GM12878 (cell line): ENCODE measurements at regions of chr1 and their contacts with region 1.

Region 1: GRCh38 chr1:192580351-192580962 is 4.9 kb downstream of the RGS1 start:
- DNase-seq: peak; percentile 81
- ATAC-seq: peak; percentile 33
- H3K4me3 ChIP-seq: peak overlapping the region; percentile 31; the same call in 1 of the 2 replicates
- H3K27ac ChIP-seq: no peak overlapping the region
- H3K4me1 ChIP-seq: no peaks in the 10 kb centered on the region
- H3K27me3 ChIP-seq: no peaks in the 10 kb centered on the region
- CTCF ChIP-seq: peak; percentile 29 to 70 (median 55); a peak in 5 of 6 replicates
- EP300 ChIP-seq: peak in 1 of 2 experiments; percentile 60; a peak in 2 of 4 replicates
- POLR2A ChIP-seq: peak; percentile 70; the same call in 1 of the 2 replicates
- RAD21 ChIP-seq: peak; percentile 95

Region 2: DNA sequence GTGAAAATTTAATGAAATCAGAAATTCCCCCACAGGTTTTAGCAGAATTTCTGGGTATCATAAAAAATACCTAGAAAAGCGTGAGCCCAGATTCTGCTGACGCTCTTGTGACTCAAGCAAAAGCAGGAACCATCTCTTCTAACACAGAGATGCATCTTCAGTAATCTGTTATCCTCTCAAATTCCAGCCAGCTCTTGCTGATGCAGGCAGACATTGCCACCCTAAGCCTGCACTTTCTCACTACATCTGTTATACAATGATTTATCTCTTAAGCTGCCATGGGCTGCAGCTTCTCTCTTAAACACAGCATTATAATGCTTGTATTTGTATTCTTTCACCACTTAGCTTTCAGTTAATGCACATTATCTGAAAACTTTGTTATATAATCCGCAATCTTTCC is 117.8 kb before region 1 on chr1:
- CTCF ChIA-PET with region 1: no interaction called
- POLR2A ChIA-PET with region 1: no interaction called
- RAD21 ChIA-PET with region 1: no interaction called
- SMC1A ChIA-PET with region 1: no interaction called
- in situ Hi-C with region 1: no loop called
- intact Hi-C with region 1: no loop called
- DNase-seq: no peak
- ATAC-seq: no peak
- H3K4me3 ChIP-seq: no peak overlapping the region
- H3K27ac ChIP-seq: no peak overlapping the region
- H3K4me1 ChIP-seq: no peaks in the 10 kb centered on the region
- H3K27me3 ChIP-seq: no peaks in the 10 kb centered on the region
- CTCF ChIP-seq: no peak
- EP300 ChIP-seq: no peak
- POLR2A ChIP-seq: no peak
- RAD21 ChIP-seq: no peak

Region 3: DNA sequence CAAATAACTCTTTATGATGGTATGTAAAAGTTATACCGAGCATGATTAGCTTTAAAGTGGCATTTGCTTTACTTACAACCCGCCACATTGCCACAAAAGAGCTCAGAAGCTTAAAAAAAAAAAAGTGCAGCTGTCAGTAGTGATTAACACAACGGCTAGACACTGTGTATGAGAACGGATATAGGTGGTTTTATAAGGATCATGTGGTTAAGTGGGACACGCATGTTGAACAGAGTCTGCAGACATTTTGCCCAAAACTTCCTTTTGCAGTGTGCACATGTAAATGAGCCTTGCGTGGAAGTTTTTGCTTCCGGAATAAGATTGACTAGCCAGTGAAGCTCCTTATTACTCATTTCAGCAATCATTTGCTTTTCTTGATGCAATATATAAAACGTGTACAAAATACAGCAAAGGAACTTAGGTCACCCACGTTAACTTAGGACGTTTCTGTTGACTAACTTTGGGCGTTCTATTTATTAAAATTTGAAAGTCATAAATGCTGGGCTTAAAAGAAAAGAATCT is 63.6 kb before region 1 on chr1:
- CTCF ChIA-PET with region 1: interaction called, 14 read pairs
- POLR2A ChIA-PET with region 1: interaction called, 14 read pairs
- RAD21 ChIA-PET with region 1: interaction called, 21 read pairs
- SMC1A ChIA-PET with region 1: interaction called, 38 read pairs
- in situ Hi-C with region 1: no loop called
- intact Hi-C with region 1: loop called (anchors 1 kb)
- DNase-seq: peak; percentile 99
- ATAC-seq: peak; percentile 87
- H3K4me3 ChIP-seq: 0 out of 2 replicates have a peak overlapping the region, but pooled peaks have one; percentile 34
- H3K27ac ChIP-seq: peak overlapping the region; percentile 72
- H3K4me1 ChIP-seq: peaks cover 22% of the 10 kb centered on the region; the same call in 1 of the 2 replicates
- H3K27me3 ChIP-seq: no peaks in the 10 kb centered on the region
- CTCF ChIP-seq: no peak
- EP300 ChIP-seq: peak; percentile 99
- POLR2A ChIP-seq: no peak
- RAD21 ChIP-seq: peak; percentile 14; the same call in 1 of the 2 replicates

Region 4: GRCh38 chr1:192545896-192546521 is 34.4 kb before region 1 on chr1:
- CTCF ChIA-PET with region 1: interaction called, 6 read pairs
- POLR2A ChIA-PET with region 1: interaction called, 21 read pairs
- RAD21 ChIA-PET with region 1: interaction called, 50 read pairs
- SMC1A ChIA-PET with region 1: interaction called, 125 read pairs
- in situ Hi-C with region 1: no loop called
- intact Hi-C with region 1: loop called (anchors 1 kb)
- DNase-seq: peak; percentile 87
- ATAC-seq: peak; percentile 67
- H3K4me3 ChIP-seq: no peak overlapping the region; the same call in 1 of the 2 replicates
- H3K27ac ChIP-seq: peak overlapping the region; percentile 84
- H3K4me1 ChIP-seq: peaks cover 53% of the 10 kb centered on the region
- H3K27me3 ChIP-seq: no peaks in the 10 kb centered on the region
- CTCF ChIP-seq: peak in 2 of 3 experiments; percentile 37 to 41; a peak in 2 of 6 replicates
- EP300 ChIP-seq: peak in 1 of 2 experiments; percentile 39; a peak in 1 of 4 replicates
- POLR2A ChIP-seq: 0 out of 2 replicates have a peak, but pooled peaks have one; percentile 34
- RAD21 ChIP-seq: peak; percentile 29; the same call in 1 of the 2 replicates

Region 5: DNA sequence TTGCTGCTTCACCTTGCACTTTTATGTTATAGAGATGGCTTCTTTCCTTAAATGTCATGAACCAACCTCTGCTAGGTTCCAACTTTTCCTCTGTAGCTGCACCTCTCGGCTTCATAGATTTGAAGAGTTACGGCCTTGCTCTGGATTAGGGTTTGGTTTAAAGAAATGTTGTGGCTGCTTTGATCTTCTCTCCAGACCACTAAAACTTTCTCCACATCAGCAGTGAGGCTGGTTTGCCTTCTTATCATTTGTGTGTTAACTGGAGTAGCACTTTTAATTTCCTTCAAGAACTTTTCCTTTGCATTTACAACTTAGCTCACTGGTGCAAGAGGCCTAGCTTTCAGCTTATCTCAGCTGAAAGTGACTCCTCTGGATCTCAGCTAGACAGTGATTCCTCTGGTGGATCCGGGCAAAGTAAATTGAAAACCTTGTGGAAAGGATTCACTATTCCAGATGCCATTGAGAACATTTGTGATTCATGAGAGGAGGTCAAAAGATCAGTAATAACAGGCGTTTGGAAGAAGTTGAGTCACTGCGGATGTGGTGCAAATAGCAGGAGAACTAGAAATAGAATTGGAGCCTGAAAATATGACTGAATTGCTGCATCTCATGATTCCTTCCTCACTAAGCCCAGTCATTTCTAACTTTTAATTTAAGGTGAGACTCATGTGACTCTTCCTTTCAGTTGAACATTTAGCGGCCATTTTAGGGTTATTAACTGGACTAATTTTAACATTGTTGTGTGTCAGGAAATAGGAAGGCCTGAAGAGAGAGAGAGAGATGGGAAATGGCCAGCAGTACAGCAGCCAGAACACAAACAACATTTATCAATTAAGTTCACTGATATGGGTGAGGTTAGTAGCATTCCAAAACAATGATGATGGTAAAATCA is 21.1 kb before region 1 on chr1:
- CTCF ChIA-PET with region 1: interaction called, 11 read pairs
- POLR2A ChIA-PET with region 1: interaction called, 34 read pairs
- RAD21 ChIA-PET with region 1: interaction called, 11 read pairs
- SMC1A ChIA-PET with region 1: interaction called, 58 read pairs
- in situ Hi-C with region 1: no loop called
- intact Hi-C with region 1: loop called (anchors 1 kb)
- DNase-seq: no peak
- ATAC-seq: peak; percentile 54
- H3K4me3 ChIP-seq: peak overlapping the region; percentile 23; the same call in 1 of the 2 replicates
- H3K27ac ChIP-seq: peak overlapping the region; percentile 79
- H3K4me1 ChIP-seq: peaks cover 3% of the 10 kb centered on the region; the same call in 1 of the 2 replicates
- H3K27me3 ChIP-seq: no peaks in the 10 kb centered on the region
- CTCF ChIP-seq: no peak
- EP300 ChIP-seq: peak; percentile 93 to 99
- POLR2A ChIP-seq: no peak
- RAD21 ChIP-seq: peak; percentile 14; the same call in 1 of the 2 replicates

Region 6: DNA sequence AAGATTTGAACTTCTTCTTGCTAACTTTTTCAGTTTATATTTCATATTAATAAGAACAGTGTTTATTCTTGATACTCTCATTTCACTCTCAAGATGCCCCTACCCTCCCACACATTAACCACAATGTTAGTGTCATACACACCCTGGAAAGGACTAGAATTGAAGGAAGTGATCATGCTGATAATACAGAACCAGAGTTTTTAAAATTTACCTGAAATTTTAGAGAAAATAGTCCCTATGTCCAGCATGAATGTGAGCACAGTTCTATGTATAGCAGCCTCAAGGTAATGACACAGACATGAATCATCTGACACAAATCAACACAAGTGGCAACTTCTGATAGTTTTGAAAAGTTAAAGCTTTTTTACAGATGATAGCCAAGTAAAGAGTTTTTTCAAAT is 21.1 kb after region 1 on chr1:
- CTCF ChIA-PET with region 1: interaction called, 29 read pairs
- POLR2A ChIA-PET with region 1: interaction called, 16 read pairs
- RAD21 ChIA-PET with region 1: interaction called, 65 read pairs
- SMC1A ChIA-PET with region 1: interaction called, 175 read pairs
- in situ Hi-C with region 1: no loop called
- intact Hi-C with region 1: loop called (anchors 1 kb)
- DNase-seq: no peak
- ATAC-seq: peak; percentile 43
- H3K4me3 ChIP-seq: no peak overlapping the region
- H3K27ac ChIP-seq: no peak overlapping the region
- H3K4me1 ChIP-seq: peaks cover 10% of the 10 kb centered on the region; the same call in 1 of the 2 replicates
- H3K27me3 ChIP-seq: no peaks in the 10 kb centered on the region
- CTCF ChIP-seq: no peak
- EP300 ChIP-seq: no peak; a peak in 1 of 4 replicates
- POLR2A ChIP-seq: no peak
- RAD21 ChIP-seq: no peak

Region 7: DNA sequence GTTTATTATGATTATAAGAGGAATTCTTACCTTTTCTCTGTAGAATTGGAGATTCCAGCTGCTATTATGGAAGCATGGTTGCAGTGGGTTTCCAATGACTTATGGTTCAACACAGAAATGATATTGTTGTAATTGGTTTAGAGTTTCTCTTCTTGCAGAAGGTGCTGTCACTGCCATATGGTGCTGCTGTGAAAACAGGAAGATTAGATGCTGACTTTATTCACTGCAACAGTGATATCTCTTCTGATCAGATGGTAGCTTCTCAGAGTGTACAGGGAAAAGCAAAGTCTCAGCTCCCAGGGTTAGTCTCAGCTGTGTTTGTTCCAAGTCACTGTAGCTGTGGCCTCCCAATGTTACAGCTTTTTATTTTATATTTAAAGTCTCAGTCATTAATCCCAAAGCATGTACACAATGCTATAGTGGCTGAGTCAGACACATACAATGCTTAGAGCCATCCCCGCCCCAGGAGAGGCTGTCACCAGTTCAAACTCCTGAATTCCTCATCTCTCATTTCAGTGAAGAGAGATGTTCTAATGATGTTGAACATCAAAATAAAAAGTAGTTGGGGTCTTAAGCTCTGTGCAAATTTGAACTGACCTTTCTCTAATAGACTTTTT is 185.7 kb after region 1 on chr1:
- CTCF ChIA-PET with region 1: no interaction called
- POLR2A ChIA-PET with region 1: no interaction called
- RAD21 ChIA-PET with region 1: no interaction called
- SMC1A ChIA-PET with region 1: no interaction called
- in situ Hi-C with region 1: no loop called
- intact Hi-C with region 1: no loop called
- DNase-seq: no peak
- ATAC-seq: no peak
- H3K4me3 ChIP-seq: no peak overlapping the region
- H3K27ac ChIP-seq: no peak overlapping the region
- H3K4me1 ChIP-seq: no peaks in the 10 kb centered on the region
- H3K27me3 ChIP-seq: no peaks in the 10 kb centered on the region; a peak in 2 of 4 replicates
- CTCF ChIP-seq: no peak
- EP300 ChIP-seq: no peak
- POLR2A ChIP-seq: no peak
- RAD21 ChIP-seq: no peak